Adrenal gland (tissue), 19 donors: ENCODE measurements at regions of chr1 and their contacts with region 1.

Region 1: DNA sequence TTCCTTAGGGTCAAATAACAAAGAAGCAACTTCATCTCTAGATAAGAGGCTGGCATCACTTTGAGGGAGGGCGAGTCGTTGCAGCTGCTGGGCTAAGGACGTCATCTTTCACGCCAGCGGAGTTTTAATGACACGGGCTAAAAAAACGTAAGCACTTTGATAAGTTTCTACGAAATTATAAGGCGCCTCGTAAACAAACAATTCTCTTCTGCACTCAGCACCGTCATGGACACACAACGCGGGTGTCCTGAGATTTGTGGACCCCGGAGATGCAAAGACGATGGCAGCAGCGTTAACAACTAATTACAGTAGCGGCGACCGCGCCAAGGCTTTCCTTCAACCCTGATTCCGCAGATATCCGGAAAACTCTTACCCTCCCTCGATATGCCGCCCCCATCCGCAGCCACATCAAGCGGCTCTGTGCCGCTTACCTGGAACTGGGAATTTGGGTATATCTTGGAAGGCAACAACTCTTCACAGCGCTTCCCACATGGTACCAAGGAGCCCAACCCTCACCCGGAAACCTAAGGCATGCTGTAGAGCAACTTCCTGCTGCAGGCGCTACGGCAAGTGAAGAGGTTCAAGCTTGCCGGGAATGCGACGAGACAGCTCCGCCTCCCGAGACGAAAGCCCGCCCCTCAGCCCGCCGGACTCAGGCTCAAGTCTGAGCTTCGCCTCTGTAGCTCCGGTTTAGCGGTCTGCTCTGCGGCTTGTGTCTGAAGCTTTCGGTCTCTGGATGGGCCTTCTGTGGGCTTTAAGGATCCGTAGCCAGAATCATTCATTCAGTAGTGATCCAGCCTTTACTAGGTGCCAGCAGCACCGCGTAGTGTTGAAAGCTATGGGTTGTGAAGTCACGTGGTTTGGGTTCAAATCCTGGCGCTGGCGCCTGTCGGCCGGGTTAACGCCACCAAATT is at the start of gene HEATR1:
- DNase-seq: peak; percentile 93 to 97 (median 95)
- H3K4me3 ChIP-seq: peak within 1 kb of the TSS; percentile 79 to 99 (median 92)
- H3K27ac ChIP-seq: peak within 1 kb of the TSS; percentile 70 to 93 (median 73)
- H3K4me1 ChIP-seq: peaks cover 9 to 14% of the 10 kb centered on the region in 2 donors
- H3K27me3 ChIP-seq: peaks cover 5% of the 10 kb centered on the region
- CTCF ChIP-seq: peak in 1 of 6 experiments; percentile 14
- POLR2A ChIP-seq: peak; percentile 16 to 52
- total RNA-seq, gene HEATR1: 11.0 to 50.8 (median 26.5) TPM

Region 2: GRCh38 chr1:236552901-236553300 is 51.3 kb before region 1 on chr1:
- intact Hi-C with region 1: loop called in 1 of 2 experiments (anchors 10 kb)
- DNase-seq: no peak
- H3K4me3 ChIP-seq: no peak overlapping the region
- H3K27ac ChIP-seq: no peak overlapping the region
- H3K4me1 ChIP-seq: no peaks in the 10 kb centered on the region
- H3K27me3 ChIP-seq: no peaks in the 10 kb centered on the region
- CTCF ChIP-seq: no peak
- POLR2A ChIP-seq: no peak

Region 3: GRCh38 chr1:237386362-237387143 is 782.3 kb after region 1 on chr1:
- intact Hi-C with region 1: loop called in 1 of 2 experiments (anchors 5 kb)
- DNase-seq: no peak
- H3K4me3 ChIP-seq: no peak overlapping the region
- H3K27ac ChIP-seq: no peak overlapping the region
- H3K4me1 ChIP-seq: no peaks in the 10 kb centered on the region
- H3K27me3 ChIP-seq: no peaks in the 10 kb centered on the region
- CTCF ChIP-seq: peak; percentile 29 to 66 (median 48)
- POLR2A ChIP-seq: no peak

Region 4: DNA sequence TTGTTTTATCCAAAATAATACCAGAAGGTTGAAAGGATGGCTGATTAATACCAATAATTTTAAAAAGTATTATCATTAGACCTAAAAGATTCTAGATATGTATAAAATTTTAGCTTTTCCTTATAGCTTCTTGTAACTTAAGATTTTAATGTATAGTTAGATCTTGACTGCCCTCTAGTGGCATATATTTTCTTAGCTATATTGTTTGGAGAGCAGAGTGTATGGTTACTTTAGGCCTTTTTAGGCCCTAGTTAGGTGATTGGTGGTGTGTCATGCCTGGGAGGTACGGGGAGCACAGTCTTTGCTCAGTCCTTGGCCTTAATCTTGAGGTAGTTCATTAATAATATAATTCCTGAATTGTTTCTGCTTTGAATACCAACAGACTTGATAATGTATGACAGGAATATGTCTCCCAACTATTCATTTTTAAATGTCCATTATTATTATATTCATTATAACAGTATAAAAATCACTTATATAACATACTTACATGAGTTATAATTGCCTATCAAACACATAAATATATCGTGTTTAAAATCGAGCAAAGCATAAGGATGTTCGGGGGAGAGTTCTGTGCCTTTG is 958.1 kb after region 1 on chr1:
- intact Hi-C with region 1: loop called in 1 of 2 experiments (anchors 10 kb)
- DNase-seq: no peak
- H3K4me3 ChIP-seq: no peak overlapping the region
- H3K27ac ChIP-seq: no peak overlapping the region
- H3K4me1 ChIP-seq: no peaks in the 10 kb centered on the region
- H3K27me3 ChIP-seq: no peaks in the 10 kb centered on the region
- CTCF ChIP-seq: peak; percentile 20 to 69 (median 42)
- POLR2A ChIP-seq: no peak